SK-N-SH (cell line): ENCODE measurements at regions of chr5 and their contacts with region 1.

Region 1: DNA sequence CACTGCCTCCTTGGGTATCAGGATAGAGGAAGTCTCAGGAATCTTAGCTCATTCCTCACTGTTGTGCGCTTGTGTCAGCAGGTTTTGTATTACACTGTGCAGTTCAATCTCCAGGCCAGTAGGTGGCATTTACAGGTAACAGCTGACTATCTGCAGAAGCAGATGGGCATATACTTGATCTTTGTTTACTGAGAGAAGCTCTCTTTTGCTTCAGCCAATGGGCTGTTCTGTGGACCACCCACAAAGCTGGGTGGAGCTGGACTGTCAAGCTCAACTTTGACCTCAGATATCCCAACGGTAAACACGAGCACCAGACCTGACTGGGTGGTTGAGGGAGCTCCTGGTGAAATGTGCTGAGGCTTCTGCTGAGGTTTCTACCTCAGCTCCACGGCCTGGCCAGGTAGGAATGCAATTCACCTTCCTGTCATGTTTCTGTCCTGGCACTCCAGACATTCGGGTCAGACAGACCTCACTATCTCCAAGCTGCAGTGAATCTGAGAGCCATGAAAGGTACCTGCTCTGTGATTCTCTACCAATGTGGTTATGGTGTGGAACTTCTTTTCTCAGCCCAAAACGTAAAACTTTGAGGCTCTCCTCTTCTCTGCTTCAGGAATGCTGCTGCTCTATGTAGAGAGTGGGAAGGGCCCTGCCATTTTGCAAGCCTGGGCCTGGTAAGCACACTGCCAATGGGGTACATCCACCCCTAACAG is 167.9 kb upstream of the ACTBL2 start:
- DNase-seq: peak; percentile 5
- H3K4me3 ChIP-seq: no peak overlapping the region; a peak in 1 of 4 replicates
- H3K27ac ChIP-seq: no peak overlapping the region
- H3K4me1 ChIP-seq: no peaks in the 10 kb centered on the region
- H3K27me3 ChIP-seq: no peaks in the 10 kb centered on the region
- CTCF ChIP-seq: peak; percentile 65
- EP300 ChIP-seq: no peak
- RAD21 ChIP-seq: peak; percentile 63

Region 2: GRCh38 chr5:57635146-57635777 is 15.3 kb before region 1 on chr5:
- CTCF ChIA-PET with region 1: interaction called, 13 read pairs
- POLR2A ChIA-PET with region 1: no interaction called
- DNase-seq: no peak
- H3K4me3 ChIP-seq: no peak overlapping the region
- H3K27ac ChIP-seq: no peak overlapping the region
- H3K4me1 ChIP-seq: no peaks in the 10 kb centered on the region
- H3K27me3 ChIP-seq: 0 out of 2 replicates have a peak, but pooled peaks cover 4% of the 10 kb centered on the region
- CTCF ChIP-seq: no peak
- EP300 ChIP-seq: no peak
- RAD21 ChIP-seq: no peak